ENCODE measurements at regions of chr20 and their contacts with region 1.

Region 1: DNA sequence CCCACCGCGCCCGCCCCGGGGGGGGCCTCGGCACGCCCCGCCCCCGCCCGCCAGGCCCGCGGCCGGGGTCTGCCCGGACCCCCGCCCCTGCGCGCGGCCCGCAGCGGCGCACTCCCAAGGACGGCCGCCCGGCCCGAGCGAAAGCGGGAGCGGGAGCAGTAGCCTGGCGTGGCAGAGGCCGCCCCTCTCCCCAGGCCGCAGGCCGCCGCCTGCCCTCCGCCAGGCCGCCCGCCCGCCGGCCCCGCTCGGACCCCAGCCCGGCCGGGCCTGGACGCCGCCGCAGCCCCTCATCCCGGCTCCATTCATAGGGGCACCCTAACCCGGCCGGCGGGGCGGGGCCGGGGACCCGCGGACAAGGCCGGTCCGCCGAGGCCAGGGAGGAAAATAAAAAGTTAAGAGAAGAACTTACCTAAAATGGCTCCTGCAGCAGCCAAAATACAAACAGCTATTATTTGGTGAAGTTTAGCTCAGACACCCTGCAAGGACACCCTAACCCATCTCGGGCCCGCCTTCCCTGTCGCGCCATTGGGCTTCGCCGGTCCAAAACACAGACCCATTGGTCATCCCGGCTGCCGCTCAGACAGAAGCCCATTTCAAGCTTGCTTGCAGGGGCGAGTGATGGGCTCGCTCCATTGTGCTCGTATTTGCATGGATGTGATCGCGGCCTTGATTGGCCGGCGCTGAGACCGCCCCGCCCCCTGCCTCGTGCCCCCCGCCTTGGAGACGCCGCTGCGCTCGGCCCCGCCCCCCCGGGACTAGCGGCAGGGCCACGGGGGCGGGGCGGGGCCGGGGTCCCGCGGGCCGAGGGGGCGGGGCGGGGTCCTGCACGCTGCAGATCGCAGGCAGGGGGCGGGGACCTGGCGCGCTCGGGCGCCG is at the start of gene CHD6:
- DNase-seq: peak; percentile 96 to 100 (median 99)
- ATAC-seq: peak; percentile 96
- H3K4me3 ChIP-seq: peak within 1 kb of the TSS; percentile 66
- H3K4me3 Mint-ChIP-seq: peak within 1 kb of the TSS; percentile 85 to 97 (median 94)
- H3K27ac ChIP-seq: peak within 1 kb of the TSS; percentile 80
- H3K27ac Mint-ChIP-seq: peak within 1 kb of the TSS; percentile 86 to 95 (median 91)
- H3K4me1 ChIP-seq: peaks cover 21 to 31% of the 10 kb centered on the region in 2 donors
- H3K4me1 Mint-ChIP-seq: peaks cover 31 to 54% (median 53%) of the 10 kb centered on the region in 7 donors
- H3K27me3 ChIP-seq: no peaks in the 10 kb centered on the region
- H3K27me3 Mint-ChIP-seq: peaks cover 0 to 16% (median 0%) of the 10 kb centered on the region in 5 donors
- total RNA-seq, gene CHD6: 46.3 to 132 (median 109) TPM

Region 2: DNA sequence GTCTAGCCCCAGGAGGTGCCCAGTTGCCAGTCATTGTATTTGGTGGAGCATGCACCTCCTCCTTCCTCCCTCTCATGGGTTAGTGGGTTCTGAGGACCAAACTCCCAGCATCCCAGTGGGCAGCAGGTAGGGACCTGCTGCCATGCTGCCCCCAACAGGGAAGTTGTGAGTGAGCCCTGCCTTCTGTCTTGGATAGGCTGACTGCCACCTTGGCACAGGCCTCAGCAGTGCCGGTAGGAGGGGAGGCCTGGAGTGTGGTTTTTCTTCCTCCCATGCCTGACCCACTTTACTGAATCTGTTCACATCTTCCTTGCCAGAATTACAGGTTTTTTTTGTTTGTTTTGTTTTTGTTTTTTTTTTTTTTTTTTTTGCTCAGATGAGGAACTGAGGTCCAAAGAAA is 456.3 kb before region 1 on chr20:
- CTCF ChIA-PET with region 1: no interaction called
- POLR2A ChIA-PET with region 1: no interaction called
- intact Hi-C with region 1: loop called (anchors 1 to 2 kb)
- DNase-seq: no peak
- ATAC-seq: no peak
- H3K4me3 ChIP-seq: no peak overlapping the region
- H3K4me3 Mint-ChIP-seq: peak overlapping the region in 9 of 10 donors; percentile 25 to 67 (median 39)
- H3K27ac ChIP-seq: peak overlapping the region; percentile 82
- H3K27ac Mint-ChIP-seq: peak overlapping the region; percentile 79 to 100 (median 94)
- H3K4me1 ChIP-seq: peaks cover 59 to 61% of the 10 kb centered on the region in 2 donors
- H3K4me1 Mint-ChIP-seq: peaks cover 60 to 81% (median 76%) of the 10 kb centered on the region in 7 donors
- H3K27me3 ChIP-seq: no peaks in the 10 kb centered on the region
- H3K27me3 Mint-ChIP-seq: no peaks in the 10 kb centered on the region

Region 3: GRCh38 chr20:41339507-41340326 is 278.5 kb before region 1 on chr20:
- CTCF ChIA-PET with region 1: no interaction called
- POLR2A ChIA-PET with region 1: interaction called, 4 read pairs
- intact Hi-C with region 1: loop called in 1 of 2 experiments (anchors 1 kb)
- DNase-seq: peak; percentile 72 to 92 (median 83)
- ATAC-seq: peak; percentile 97
- H3K4me3 ChIP-seq: peak overlapping the region; percentile 28
- H3K4me3 Mint-ChIP-seq: peak overlapping the region; percentile 72 to 85 (median 82)
- H3K27ac ChIP-seq: no peak overlapping the region
- H3K27ac Mint-ChIP-seq: peak overlapping the region in 5 of 9 donors; percentile 47 to 86 (median 67)
- H3K4me1 ChIP-seq: peaks cover 0 to 3% of the 10 kb centered on the region in 2 donors
- H3K4me1 Mint-ChIP-seq: peaks cover 8 to 15% (median 9%) of the 10 kb centered on the region in 7 donors
- H3K27me3 ChIP-seq: no peaks in the 10 kb centered on the region
- H3K27me3 Mint-ChIP-seq: peaks cover 0 to 12% (median 3%) of the 10 kb centered on the region in 5 donors

Region 4: GRCh38 chr20:41436679-41437078 is 181.5 kb before region 1 on chr20:
- CTCF ChIA-PET with region 1: no interaction called
- POLR2A ChIA-PET with region 1: interaction called, 4 read pairs
- intact Hi-C with region 1: loop called in 1 of 2 experiments (anchors 1 kb)
- DNase-seq: peak in 6 of 9 donors; percentile 10 to 59 (median 50)
- ATAC-seq: peak; percentile 89
- H3K4me3 ChIP-seq: no peak overlapping the region
- H3K4me3 Mint-ChIP-seq: peak overlapping the region in 9 of 10 donors; percentile 21 to 85 (median 47)
- H3K27ac ChIP-seq: no peak overlapping the region
- H3K27ac Mint-ChIP-seq: peak overlapping the region in 8 of 9 donors; percentile 6 to 92 (median 55)
- H3K4me1 ChIP-seq: peaks cover 0 to 21% of the 10 kb centered on the region in 2 donors
- H3K4me1 Mint-ChIP-seq: peaks cover 35 to 79% (median 67%) of the 10 kb centered on the region in 7 donors
- H3K27me3 ChIP-seq: no peaks in the 10 kb centered on the region
- H3K27me3 Mint-ChIP-seq: no peaks in the 10 kb centered on the region

Region 5: GRCh38 chr20:41693136-41693979 is 75.2 kb after region 1 on chr20:
- CTCF ChIA-PET with region 1: no interaction called
- POLR2A ChIA-PET with region 1: interaction called, 60 read pairs
- intact Hi-C with region 1: loop called (anchors 1 kb)
- DNase-seq: peak; percentile 59 to 89 (median 83)
- ATAC-seq: peak; percentile 94
- H3K4me3 ChIP-seq: peak overlapping the region; percentile 63
- H3K4me3 Mint-ChIP-seq: peak overlapping the region; percentile 87 to 94 (median 92)
- H3K27ac ChIP-seq: peak overlapping the region; percentile 77
- H3K27ac Mint-ChIP-seq: peak overlapping the region; percentile 91 to 99 (median 96)
- H3K4me1 ChIP-seq: no peaks in the 10 kb centered on the region
- H3K4me1 Mint-ChIP-seq: peaks cover 6 to 24% (median 20%) of the 10 kb centered on the region in 7 donors
- H3K27me3 ChIP-seq: no peaks in the 10 kb centered on the region
- H3K27me3 Mint-ChIP-seq: peaks cover 2 to 6% (median 5%) of the 10 kb centered on the region in 5 donors

Region 6: DNA sequence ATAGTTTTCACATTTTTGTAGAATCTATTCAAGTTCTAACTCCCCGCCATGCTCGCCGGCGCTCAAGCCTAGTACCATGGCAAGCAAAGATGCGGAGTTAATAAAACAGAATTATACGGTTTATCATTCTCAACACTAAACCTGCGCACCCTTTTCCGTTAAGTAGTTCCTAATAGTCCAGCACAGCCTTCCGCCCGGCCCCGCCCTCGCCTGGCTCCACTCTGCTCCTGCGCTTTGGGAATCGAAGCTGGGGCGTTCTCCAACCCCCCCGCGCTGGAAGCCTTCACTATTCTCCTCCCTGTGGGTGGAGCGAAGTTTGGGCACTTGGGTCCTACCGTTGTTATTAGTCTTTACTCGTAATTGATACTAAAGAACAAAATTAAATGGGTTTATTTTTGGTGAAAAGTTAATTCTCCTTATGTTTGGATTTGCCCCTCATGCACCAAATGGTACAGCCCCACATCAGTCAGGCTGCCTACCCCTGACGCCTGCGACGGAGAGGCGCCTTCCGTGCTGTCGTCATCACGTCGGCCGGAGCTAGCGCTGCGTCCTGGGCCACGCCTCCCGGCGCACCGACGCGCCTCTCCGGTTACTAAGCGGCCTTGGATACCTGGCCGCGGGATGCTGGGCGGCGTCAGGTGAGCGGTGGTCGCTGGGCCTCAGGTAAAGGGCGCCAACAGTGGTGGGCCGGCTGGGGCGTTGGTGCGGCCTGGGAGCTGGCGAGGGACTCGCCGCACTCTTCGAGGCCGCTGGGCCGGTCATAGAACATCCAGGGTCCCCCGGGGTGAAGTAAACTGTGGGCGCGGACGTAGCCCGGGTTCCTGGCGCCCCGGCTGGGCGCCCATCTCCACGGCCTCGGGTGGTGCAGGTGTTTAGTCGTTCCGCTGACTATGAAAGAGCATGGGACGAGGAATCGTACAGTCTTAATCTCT is 1972.5 kb after region 1 on chr20 and contains the start of gene IFT52:
- CTCF ChIA-PET with region 1: no interaction called
- POLR2A ChIA-PET with region 1: no interaction called
- intact Hi-C with region 1: loop called in 1 of 2 experiments (anchors 5 kb)
- DNase-seq: peak; percentile 76 to 89 (median 87)
- ATAC-seq: peak; percentile 98
- H3K4me3 ChIP-seq: peak within 1 kb of the TSS; percentile 90
- H3K4me3 Mint-ChIP-seq: peak within 1 kb of the TSS; percentile 90 to 97 (median 94)
- H3K27ac ChIP-seq: peak within 1 kb of the TSS; percentile 88
- H3K27ac Mint-ChIP-seq: peak within 1 kb of the TSS; percentile 91 to 98 (median 97)
- H3K4me1 ChIP-seq: peaks cover 5 to 10% of the 10 kb centered on the region in 2 donors
- H3K4me1 Mint-ChIP-seq: peaks cover 17 to 21% (median 21%) of the 10 kb centered on the region in 7 donors
- H3K27me3 ChIP-seq: no peaks in the 10 kb centered on the region
- H3K27me3 Mint-ChIP-seq: peaks cover 0 to 5% (median 0%) of the 10 kb centered on the region in 5 donors
- total RNA-seq, gene IFT52: 14.8 to 19.7 (median 16.9) TPM

Measured in naive thymus-derived CD4-positive, alpha-beta T cell (primary cell).